ENCODE measurements at regions of chr9 and their contacts with region 1.

Region 1: DNA sequence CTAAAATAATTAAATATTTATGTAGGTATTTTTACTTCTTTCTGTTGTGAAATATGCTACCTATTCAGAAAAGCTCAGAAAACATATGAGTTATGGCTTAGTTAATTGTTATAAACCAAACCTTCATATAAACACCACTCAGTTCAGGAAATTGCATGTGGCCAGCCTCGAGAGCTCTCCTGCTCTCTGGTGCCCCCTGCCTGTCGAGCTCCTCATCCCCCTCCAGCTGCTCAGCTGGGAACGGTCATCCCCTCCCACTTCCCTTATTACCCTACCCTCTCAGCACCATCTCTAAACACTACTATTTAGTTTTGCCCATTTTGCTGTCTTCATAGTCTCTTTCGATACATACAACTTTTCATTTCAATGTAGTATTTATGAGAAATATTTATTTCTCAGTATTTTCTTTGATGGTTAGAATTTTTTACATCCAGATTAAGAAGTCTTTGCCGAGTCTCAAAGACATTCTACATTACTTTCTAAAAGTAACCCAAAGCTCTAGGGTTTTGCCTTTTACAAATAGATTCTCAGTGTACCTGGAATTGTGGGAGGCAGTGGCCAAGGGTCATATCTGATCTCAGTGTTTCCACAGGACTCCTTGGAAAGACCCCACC is 51.2 kb upstream of the SEMA4D start:
- DNase-seq: peak; percentile 84 to 87 (median 86)
- H3K4me3 ChIP-seq: no peak overlapping the region
- H3K4me3 Mint-ChIP-seq: no peak overlapping the region
- H3K27ac ChIP-seq: peak overlapping the region in 1 of 2 donors; percentile 7
- H3K27ac Mint-ChIP-seq: peak overlapping the region in 2 of 7 donors; percentile 7 to 22
- H3K4me1 ChIP-seq: peaks cover 30 to 41% of the 10 kb centered on the region in 2 donors
- H3K4me1 Mint-ChIP-seq: peaks cover 35% of the 10 kb centered on the region
- H3K27me3 ChIP-seq: no peaks in the 10 kb centered on the region
- H3K27me3 Mint-ChIP-seq: no peaks in the 10 kb centered on the region
- CTCF ChIP-seq: peak; percentile 85

Region 2: DNA sequence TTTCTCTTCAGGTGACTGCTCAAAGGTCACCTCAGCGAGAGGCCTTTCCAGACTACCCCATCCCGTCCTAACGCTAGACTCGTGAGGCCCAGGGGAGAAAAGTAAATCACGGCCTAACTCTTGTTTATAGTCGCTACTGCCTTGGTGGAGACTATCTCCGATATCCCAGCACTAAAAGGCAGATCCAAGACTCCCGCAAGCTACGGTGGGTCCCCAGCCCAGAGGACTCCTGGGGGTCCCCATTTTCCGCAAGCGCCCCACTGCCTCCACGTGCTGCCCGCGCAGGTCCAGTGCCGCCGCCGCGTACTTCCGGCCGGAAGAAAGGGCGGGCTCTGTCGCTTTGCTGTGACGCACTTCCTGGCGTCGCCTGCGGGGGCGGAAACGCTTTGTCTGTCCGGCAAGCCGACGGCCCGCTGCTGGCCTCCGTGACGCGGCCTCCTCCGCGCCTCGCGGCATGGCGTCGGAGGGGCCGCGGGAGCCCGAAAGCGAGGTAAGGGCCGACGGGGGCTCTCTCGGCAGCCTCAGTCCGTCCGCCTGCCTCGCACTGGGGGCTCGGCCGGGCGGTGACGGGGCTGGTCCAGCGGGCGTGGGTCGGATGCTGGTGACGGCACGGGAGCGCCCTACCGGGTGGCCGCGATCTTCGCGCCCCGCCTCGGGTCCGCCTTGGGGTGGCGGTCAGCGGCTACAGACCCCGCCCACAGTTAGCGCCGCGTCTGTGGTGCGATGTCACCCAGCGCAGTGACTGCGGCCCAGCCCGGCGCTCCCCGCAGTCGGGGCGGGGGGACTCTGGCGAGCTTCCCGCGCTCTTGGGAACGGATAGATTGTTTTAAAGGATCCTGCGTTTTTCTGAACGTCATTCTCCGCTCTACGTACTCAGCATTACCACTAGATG is 230.8 kb before region 1 on chr9 and contains the start of gene SECISBP2:
- intact Hi-C with region 1: loop called in 1 of 2 experiments (anchors 5 kb)
- DNase-seq: peak; percentile 91 to 96 (median 95)
- H3K4me3 ChIP-seq: peak within 1 kb of the TSS; percentile 54 to 77 (median 76)
- H3K4me3 Mint-ChIP-seq: peak within 1 kb of the TSS; percentile 86 to 92
- H3K27ac ChIP-seq: peak within 1 kb of the TSS; percentile 96
- H3K27ac Mint-ChIP-seq: peak within 1 kb of the TSS; percentile 97 to 98 (median 98)
- H3K4me1 ChIP-seq: peaks cover 31 to 45% of the 10 kb centered on the region in 2 donors
- H3K4me1 Mint-ChIP-seq: peaks cover 53% of the 10 kb centered on the region
- H3K27me3 ChIP-seq: no peaks in the 10 kb centered on the region
- H3K27me3 Mint-ChIP-seq: no peaks in the 10 kb centered on the region
- CTCF ChIP-seq: peak; percentile 79
- polyA plus RNA-seq, gene SECISBP2: 8.6 to 51.4 (median 9.8) TPM

Region 3: DNA sequence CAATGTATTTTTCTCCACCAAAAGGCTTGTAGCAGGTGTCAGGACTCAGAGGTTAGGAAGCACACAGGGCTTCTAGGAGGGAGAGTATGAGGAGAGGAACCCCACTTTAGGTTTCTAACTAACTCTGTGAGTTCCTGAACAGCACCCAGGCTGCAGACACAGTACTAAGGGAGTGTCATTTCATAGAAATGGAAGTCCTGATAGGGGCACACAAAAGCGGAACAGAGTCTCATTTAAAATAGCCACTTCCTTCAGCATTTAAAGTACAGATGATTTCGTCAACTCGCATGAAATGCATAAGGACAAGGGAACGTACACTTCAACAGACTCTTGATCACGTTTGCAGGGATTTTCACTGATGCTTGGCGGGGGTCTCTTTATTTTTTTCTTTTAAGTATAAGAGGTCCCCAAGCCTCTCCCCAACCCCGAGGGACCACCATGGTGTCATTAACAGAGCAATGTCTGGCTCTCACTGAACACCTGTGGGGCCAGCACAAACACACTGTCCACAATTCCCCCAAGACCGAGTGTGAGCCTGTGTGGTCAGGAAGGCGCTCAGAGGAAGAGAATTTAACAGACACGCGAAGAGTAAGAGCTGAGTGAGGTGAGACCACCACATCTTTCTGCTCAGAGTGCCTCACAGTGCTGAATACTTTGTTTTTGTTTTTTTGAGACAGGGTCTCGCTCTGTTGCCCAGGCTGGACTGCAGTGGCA is 148.6 kb before region 1 on chr9:
- intact Hi-C with region 1: loop called in 1 of 2 experiments (anchors 5 kb)
- DNase-seq: peak; percentile 77 to 89 (median 86)
- H3K4me3 ChIP-seq: peak overlapping the region in 1 of 3 experiments; percentile 42
- H3K4me3 Mint-ChIP-seq: peak overlapping the region; percentile 32 to 82
- H3K27ac ChIP-seq: peak overlapping the region; percentile 72 to 85
- H3K27ac Mint-ChIP-seq: peak overlapping the region; percentile 92 to 99 (median 96)
- H3K4me1 ChIP-seq: peaks cover 59% of the 10 kb centered on the region in 2 donors
- H3K4me1 Mint-ChIP-seq: peaks cover 75% of the 10 kb centered on the region
- H3K27me3 ChIP-seq: no peaks in the 10 kb centered on the region
- H3K27me3 Mint-ChIP-seq: peaks cover 0 to 6% (median 0%) of the 10 kb centered on the region in 3 donors
- CTCF ChIP-seq: no peak

Region 4: DNA sequence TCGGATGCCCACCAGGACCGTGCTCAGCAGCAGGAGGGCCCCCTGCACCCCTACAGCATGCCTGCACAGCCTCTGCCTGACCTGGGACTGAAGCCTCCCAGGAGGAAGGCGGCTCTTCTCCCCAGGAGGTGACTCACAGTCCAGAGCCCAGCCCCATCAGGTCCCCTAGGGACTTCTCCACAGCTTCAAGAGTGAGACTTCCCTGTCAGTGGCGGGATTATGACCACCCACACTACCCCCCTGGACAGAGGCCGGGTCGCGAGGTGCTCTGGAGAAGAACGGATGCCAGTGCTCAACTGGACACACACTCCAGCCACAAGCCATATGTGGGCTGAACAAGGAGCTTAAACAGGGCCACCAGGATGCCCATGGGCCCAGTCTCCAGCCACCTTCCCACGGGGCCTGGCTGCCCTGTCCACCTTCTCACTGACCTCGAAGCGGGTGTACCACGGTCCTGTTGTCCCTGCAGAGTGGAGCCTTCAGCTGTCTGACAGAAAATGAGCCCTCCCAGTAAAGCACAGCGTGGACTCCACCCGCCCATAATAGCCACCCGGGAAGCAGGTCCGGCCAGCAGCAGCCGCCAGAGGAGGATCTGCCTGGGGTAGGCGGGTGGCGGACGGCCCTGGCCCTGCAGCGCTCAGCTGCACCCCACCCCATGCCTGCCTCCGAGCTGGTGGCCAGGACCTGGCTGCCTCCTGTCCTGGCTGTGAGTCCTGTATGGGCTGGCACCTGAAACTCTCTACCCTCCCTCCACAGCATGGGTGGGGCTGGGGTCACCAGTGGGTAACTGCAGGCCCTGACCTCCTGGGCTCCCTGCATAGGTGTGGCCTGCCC is 105.9 kb before region 1 on chr9:
- intact Hi-C with region 1: loop called in 1 of 2 experiments (anchors 5 kb)
- DNase-seq: peak; percentile 82 to 90 (median 85)
- H3K4me3 ChIP-seq: no peak overlapping the region
- H3K4me3 Mint-ChIP-seq: peak overlapping the region; percentile 39 to 41
- H3K27ac ChIP-seq: peak overlapping the region; percentile 89 to 95
- H3K27ac Mint-ChIP-seq: peak overlapping the region; percentile 85 to 97 (median 96)
- H3K4me1 ChIP-seq: peaks cover 50 to 54% of the 10 kb centered on the region in 2 donors
- H3K4me1 Mint-ChIP-seq: peaks cover 71% of the 10 kb centered on the region
- H3K27me3 ChIP-seq: no peaks in the 10 kb centered on the region
- H3K27me3 Mint-ChIP-seq: peaks cover 0 to 2% (median 0%) of the 10 kb centered on the region in 3 donors
- CTCF ChIP-seq: no peak

Region 5: GRCh38 chr9:89497978-89498851 is 50.9 kb before region 1 on chr9 and contains the start of gene SEMA4D:
- intact Hi-C with region 1: loop called (anchors 5 kb)
- DNase-seq: peak; percentile 61 to 79 (median 74)
- H3K4me3 ChIP-seq: peak within 1 kb of the TSS; percentile 82 to 91 (median 82)
- H3K4me3 Mint-ChIP-seq: peak within 1 kb of the TSS; percentile 94 to 97
- H3K27ac ChIP-seq: peak within 1 kb of the TSS; percentile 79 to 82
- H3K27ac Mint-ChIP-seq: peak within 1 kb of the TSS; percentile 75 to 97 (median 90)
- H3K4me1 ChIP-seq: peaks cover 58% of the 10 kb centered on the region in 2 donors
- H3K4me1 Mint-ChIP-seq: peaks cover 67% of the 10 kb centered on the region
- H3K27me3 ChIP-seq: no peaks in the 10 kb centered on the region
- H3K27me3 Mint-ChIP-seq: peaks cover 0 to 4% (median 1%) of the 10 kb centered on the region in 3 donors
- CTCF ChIP-seq: no peak
- polyA plus RNA-seq, gene SEMA4D: 28.2 to 117 (median 28.6) TPM

Measured in CD14-positive monocyte (primary cell).